Spleen (tissue), 13 donors: ENCODE measurements at regions of chr3 and their contacts with region 1.

Region 1: GRCh38 chr3:187679638-187680396 is 9.6 kb upstream of the SST start:
- DNase-seq: peak; percentile 82
- H3K4me3 ChIP-seq: no peak overlapping the region
- H3K27ac ChIP-seq: no peak overlapping the region
- H3K4me1 ChIP-seq: peaks cover 0 to 11% (median 3%) of the 10 kb centered on the region in 6 donors
- H3K27me3 ChIP-seq: peaks cover 0 to 43% (median 0%) of the 10 kb centered on the region in 7 donors
- CTCF ChIP-seq: peak; percentile 79 to 94 (median 88)
- POLR2A ChIP-seq: no peak

Region 2: DNA sequence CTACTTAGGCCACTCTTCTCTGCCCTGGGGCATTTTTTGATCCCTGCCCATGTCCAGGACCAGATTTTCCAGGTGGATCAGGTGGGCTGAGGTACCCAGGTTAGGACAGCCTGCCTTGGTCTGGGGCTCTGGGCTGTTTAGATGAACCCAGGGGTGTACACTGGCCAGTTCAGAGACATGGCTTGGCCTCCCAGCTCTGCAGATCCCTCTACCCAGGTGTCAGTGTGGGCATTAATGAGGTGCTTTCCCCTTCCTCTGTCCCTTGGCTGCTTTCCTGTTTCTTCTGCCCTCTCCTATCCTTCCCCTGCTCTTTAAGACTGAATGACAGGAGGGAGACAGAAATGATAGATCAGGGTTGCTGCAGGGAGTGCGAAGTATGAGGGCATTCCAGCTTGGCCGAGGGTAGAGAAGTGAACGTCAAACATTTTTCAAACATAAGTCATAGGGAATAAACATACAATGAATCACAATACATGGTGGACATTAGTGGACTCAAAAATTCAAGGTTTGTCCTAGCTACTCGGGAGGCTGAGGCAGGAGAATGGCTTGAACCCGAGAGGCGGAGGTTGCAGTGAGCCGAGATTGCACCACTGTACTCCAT is 452.1 kb before region 1 on chr3:
- intact Hi-C with region 1: loop called (anchors 10 kb)
- DNase-seq: no peak
- H3K4me3 ChIP-seq: no peak overlapping the region
- H3K27ac ChIP-seq: no peak overlapping the region
- H3K4me1 ChIP-seq: no peaks in the 10 kb centered on the region
- H3K27me3 ChIP-seq: peaks cover 0 to 61% (median 0%) of the 10 kb centered on the region in 7 donors
- CTCF ChIP-seq: no peak
- POLR2A ChIP-seq: no peak

Region 3: DNA sequence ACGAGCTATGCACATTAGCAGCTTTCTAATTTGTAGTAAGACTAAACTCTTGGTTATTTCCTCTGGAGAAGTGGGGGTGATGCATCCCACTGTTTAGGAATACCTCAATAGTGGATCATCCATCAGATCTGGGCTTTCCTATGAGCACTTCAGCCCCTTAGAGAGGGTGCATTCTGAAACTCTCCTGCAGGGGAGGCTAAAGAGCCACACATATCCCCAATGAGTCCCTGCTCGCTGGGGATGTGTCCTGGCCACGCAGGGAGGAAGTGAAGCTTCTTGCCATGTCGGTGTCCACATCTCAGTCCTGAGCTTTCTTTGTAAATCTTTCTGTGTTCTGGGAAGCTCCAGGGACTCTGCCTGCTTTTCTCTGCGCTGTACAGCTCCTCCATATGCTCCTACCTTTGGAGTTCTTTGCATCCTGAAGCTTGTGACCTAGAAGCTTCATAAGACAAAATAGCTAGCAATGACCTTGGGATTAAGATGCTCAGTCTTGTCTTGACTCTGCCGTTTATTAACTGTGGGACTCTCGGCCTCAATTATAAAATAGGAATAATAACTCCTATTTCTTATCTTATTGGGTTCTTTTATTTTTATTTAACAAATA is 360.0 kb before region 1 on chr3:
- intact Hi-C with region 1: loop called (anchors 2 kb)
- DNase-seq: peak; percentile 75
- H3K4me3 ChIP-seq: peak overlapping the region in 1 of 8 donors; percentile 53
- H3K27ac ChIP-seq: no peak overlapping the region
- H3K4me1 ChIP-seq: peaks cover 6 to 16% (median 13%) of the 10 kb centered on the region in 6 donors
- H3K27me3 ChIP-seq: peaks cover 0 to 50% (median 5%) of the 10 kb centered on the region in 7 donors
- CTCF ChIP-seq: peak; percentile 58 to 82 (median 75)
- POLR2A ChIP-seq: no peak